Colonic mucosa (tissue), 4 donors: ENCODE measurements at regions of chr10 and their contacts with region 1.

Region 1: DNA sequence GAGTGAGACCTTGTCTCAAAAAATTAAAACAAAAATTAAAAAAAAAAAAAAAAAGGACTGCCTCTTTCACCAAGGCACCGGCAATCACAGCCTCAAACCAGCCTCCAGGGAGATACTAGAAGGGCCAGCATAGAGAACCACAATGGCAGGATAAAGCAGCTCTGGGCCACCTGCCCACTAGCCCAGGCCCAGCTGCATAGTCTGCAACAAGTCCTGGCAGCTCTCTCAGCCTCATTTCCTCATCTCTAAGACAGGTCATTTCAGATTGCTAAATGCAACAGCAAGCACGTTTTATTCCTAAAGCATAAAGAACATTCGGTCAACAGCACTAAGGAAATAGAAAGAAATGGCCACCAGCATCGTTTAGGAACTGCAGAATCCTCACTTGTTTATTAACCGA is 28.8 kb downstream of the XPNPEP1 start:
- DNase-seq: no peak
- H3K4me3 ChIP-seq: no peak overlapping the region
- H3K27ac ChIP-seq: no peak overlapping the region
- H3K4me1 ChIP-seq: peaks cover 9% of the 10 kb centered on the region
- H3K27me3 ChIP-seq: no peaks in the 10 kb centered on the region
- CTCF ChIP-seq: no peak

Region 2: DNA sequence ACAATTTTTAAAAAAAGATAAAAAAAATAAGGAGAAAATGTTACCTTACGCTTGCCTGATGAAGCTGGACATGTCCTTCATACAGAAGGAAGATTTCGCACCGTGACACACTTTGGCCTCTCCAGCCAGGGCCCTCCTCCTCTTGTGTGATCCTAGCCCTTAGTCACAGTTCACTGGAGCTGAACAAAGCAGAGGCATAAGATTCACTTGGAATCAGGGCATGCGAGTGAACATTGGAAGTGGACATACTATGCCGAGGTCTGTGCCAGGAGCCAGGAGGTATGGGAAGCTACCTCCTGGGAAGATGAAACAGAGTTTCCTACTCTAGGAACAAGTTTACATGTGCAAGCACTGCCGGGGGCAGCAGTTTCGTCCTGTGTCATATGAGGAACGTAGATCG is 62.7 kb before region 1 on chr10:
- intact Hi-C with region 1: no loop called
- DNase-seq: no peak
- H3K4me3 ChIP-seq: no peak overlapping the region
- H3K27ac ChIP-seq: no peak overlapping the region
- H3K4me1 ChIP-seq: no peaks in the 10 kb centered on the region
- H3K27me3 ChIP-seq: no peaks in the 10 kb centered on the region
- CTCF ChIP-seq: no peak

Region 3: GRCh38 chr10:109929501-109930219 is 35.1 kb after region 1 on chr10:
- intact Hi-C with region 1: loop called (anchors 5 kb)
- DNase-seq: no peak
- H3K4me3 ChIP-seq: no peak overlapping the region
- H3K27ac ChIP-seq: no peak overlapping the region
- H3K4me1 ChIP-seq: no peaks in the 10 kb centered on the region
- H3K27me3 ChIP-seq: no peaks in the 10 kb centered on the region
- CTCF ChIP-seq: no peak

Region 4: GRCh38 chr10:110009736-110010475 is 115.4 kb after region 1 on chr10:
- intact Hi-C with region 1: loop called (anchors 5 kb)
- DNase-seq: peak; percentile 38
- H3K4me3 ChIP-seq: no peak overlapping the region
- H3K27ac ChIP-seq: no peak overlapping the region
- H3K4me1 ChIP-seq: no peaks in the 10 kb centered on the region
- H3K27me3 ChIP-seq: no peaks in the 10 kb centered on the region
- CTCF ChIP-seq: no peak